ENCODE measurements at regions of chr5 and their contacts with region 1.

Region 1: GRCh38 chr5:14871210-14872069 is at the start of gene ANKH:
- DNase-seq: peak; percentile 81
- H3K4me3 Mint-ChIP-seq: peak within 1 kb of the TSS; percentile 97
- H3K27ac Mint-ChIP-seq: peak within 1 kb of the TSS; percentile 94
- H3K4me1 Mint-ChIP-seq: peaks cover 24% of the 10 kb centered on the region
- H3K27me3 Mint-ChIP-seq: peaks cover 19% of the 10 kb centered on the region
- total RNA-seq, gene ANKH: 34.2 and 35.6 TPM in 2 replicates

Region 2: DNA sequence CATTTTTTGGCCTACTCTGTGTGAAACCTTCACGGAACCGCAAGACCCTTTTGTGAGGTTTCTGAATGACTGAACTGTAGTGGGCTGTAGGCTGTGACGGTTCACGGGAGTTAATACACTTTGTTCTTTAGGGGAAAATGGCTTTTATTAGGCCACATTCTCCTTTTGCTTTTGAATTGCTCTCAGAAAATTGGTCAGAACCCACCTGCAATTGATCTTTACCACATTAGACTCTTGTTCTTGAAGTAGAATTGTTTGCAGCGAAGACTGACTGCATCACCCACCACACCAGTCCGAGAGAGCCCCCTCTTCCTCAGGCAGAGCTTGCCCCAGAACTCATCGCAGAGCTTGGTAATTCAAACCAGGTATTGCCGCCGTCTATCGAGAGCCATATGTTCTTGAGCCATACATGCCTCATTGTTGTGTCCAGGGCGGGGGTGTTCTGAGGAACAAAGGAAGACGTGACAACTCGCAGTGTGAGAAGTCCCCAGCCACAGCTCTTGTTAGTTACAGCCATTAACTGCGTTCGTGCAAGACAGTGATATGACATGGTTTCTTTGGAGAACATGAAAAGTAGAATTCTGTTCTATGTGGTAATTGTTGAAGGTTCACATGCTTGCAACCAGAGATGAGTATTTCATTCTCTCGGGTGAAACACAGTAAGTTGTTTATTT is 456.3 kb before region 1 on chr5:
- intact Hi-C with region 1: loop called (anchors 5 kb)
- DNase-seq: no peak
- H3K4me3 Mint-ChIP-seq: peak overlapping the region; percentile 43
- H3K27ac Mint-ChIP-seq: peak overlapping the region; percentile 90
- H3K4me1 Mint-ChIP-seq: peaks cover 52% of the 10 kb centered on the region
- H3K27me3 Mint-ChIP-seq: peaks cover 7% of the 10 kb centered on the region

Region 3: GRCh38 chr5:14706615-14707021 is 164.8 kb before region 1 on chr5:
- intact Hi-C with region 1: loop called (anchors 1 kb)
- DNase-seq: peak; percentile 48
- H3K4me3 Mint-ChIP-seq: peak overlapping the region; percentile 87
- H3K27ac Mint-ChIP-seq: peak overlapping the region; percentile 99
- H3K4me1 Mint-ChIP-seq: peaks cover 75% of the 10 kb centered on the region
- H3K27me3 Mint-ChIP-seq: no peaks in the 10 kb centered on the region

Region 4: DNA sequence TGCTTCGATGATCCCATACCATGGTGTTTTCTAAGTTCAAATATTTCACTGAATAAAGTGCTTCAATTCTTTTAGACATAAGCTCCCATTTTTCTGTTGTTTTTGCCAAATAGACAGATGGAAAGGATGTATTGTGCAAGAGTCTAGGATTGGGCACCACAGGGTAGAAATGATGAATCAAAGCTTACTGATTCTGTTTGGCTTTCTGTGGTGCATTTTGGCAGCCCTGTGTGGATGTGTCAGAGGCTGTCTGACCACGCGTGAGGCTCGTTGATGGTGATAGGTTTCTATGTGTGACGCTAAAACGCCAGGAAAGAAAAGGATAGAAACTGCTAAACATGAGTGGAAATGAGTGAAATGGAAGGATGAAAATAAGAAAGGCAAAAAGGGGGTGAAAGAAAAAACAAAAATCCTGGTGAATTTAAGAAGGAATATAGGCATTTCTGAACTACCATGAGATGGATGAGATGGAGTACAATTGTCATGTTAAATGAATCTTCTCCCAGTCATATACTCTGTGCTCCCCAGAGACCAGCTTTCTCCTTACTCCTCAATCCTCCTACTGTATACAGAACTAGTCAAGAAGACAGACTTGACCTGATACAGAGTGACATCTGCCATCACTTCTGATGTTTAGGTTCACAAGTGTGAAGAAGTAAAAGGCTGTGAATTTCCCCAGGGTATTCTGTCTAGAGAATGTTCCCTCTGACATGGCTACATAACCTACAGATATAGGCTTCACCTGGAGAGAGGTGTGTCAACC is 54.3 kb before region 1 on chr5:
- intact Hi-C with region 1: loop called (anchors 1 kb)
- DNase-seq: no peak
- H3K4me3 Mint-ChIP-seq: no peak overlapping the region
- H3K27ac Mint-ChIP-seq: peak overlapping the region; percentile 1
- H3K4me1 Mint-ChIP-seq: peaks cover 39% of the 10 kb centered on the region
- H3K27me3 Mint-ChIP-seq: no peaks in the 10 kb centered on the region

Region 5: DNA sequence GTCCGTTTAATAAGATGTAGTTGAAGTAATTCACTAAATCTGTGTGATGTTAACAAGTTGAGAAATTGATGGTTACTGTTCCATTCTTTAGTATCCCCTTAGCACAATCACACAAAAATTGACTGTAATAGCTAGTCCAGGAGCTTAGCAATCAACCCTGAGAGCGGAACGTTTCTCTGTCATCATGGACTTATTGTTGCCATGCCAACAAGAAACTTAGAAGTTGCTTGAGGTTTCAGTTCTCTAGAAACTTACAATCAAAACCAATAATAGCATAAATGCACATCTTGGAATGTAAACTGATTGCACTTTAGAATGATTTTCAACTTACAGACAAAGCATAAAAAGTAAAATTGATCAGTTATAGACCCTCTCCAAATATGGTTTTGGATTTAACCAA is 125.6 kb after region 1 on chr5:
- intact Hi-C with region 1: loop called (anchors 1 kb)
- DNase-seq: no peak
- H3K4me3 Mint-ChIP-seq: no peak overlapping the region
- H3K27ac Mint-ChIP-seq: no peak overlapping the region
- H3K4me1 Mint-ChIP-seq: peaks cover 38% of the 10 kb centered on the region
- H3K27me3 Mint-ChIP-seq: peaks cover 2% of the 10 kb centered on the region

Measured in activated T-helper 1 cell treated with anti-CD3 and anti-CD28 coated beads, Interleukin-12 subunit alpha, Interleukin-12 subunit beta, Interleukin-2, Interleukin-4 antibody, amounts not matched to agents 30 ng/mL and 10 ng/mL and 1 ng/mL, durations not matched to agents 14 hours and 24 hours and 36 hours (primary cell).